ENCODE measurements at regions of chrX and their contacts with region 1.

Region 1: GRCh38 chrX:73855546-73855945 is 292.5 kb downstream of the CHIC1 start:
- DNase-seq: peak; percentile 46 to 78 (median 69)
- H3K4me3 ChIP-seq: no peak overlapping the region
- H3K27ac ChIP-seq: no peak overlapping the region
- H3K4me1 ChIP-seq: no peaks in the 10 kb centered on the region
- H3K27me3 ChIP-seq: no peaks in the 10 kb centered on the region
- CTCF ChIP-seq: peak; percentile 50 to 74 (median 64)
- EP300 ChIP-seq: no peak
- POLR2A ChIP-seq: no peak

Region 2: GRCh38 chrX:73468376-73468775 is 387.2 kb before region 1 on chrX:
- intact Hi-C with region 1: no loop called
- DNase-seq: no peak
- H3K4me3 ChIP-seq: no peak overlapping the region
- H3K27ac ChIP-seq: no peak overlapping the region
- H3K4me1 ChIP-seq: no peaks in the 10 kb centered on the region
- H3K27me3 ChIP-seq: no peaks in the 10 kb centered on the region
- CTCF ChIP-seq: no peak
- EP300 ChIP-seq: no peak
- POLR2A ChIP-seq: no peak

Region 3: DNA sequence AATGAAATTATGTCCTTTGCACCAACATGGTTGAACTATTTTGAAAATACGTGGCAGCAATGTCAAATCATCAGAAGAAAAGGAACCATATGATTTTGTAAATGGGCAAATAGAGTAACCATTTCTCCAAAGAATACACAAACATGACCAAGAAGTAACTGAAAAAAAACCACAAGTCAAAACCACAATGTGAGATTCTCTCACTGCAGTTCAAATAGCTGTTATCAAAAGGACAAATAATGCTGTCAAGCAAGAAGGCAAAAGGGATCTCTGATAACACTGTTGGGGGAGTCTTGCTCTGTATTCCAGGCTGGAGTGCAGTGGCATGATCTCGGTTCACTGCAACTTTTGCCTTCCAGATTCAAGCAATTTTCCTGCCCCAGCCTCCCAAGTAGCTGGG is 167.7 kb after region 1 on chrX:
- intact Hi-C with region 1: loop called in 1 of 4 experiments (anchors 10 kb)
- DNase-seq: no peak
- H3K4me3 ChIP-seq: no peak overlapping the region
- H3K27ac ChIP-seq: no peak overlapping the region
- H3K4me1 ChIP-seq: no peaks in the 10 kb centered on the region
- H3K27me3 ChIP-seq: no peaks in the 10 kb centered on the region
- CTCF ChIP-seq: no peak
- EP300 ChIP-seq: no peak
- POLR2A ChIP-seq: no peak

Region 4: DNA sequence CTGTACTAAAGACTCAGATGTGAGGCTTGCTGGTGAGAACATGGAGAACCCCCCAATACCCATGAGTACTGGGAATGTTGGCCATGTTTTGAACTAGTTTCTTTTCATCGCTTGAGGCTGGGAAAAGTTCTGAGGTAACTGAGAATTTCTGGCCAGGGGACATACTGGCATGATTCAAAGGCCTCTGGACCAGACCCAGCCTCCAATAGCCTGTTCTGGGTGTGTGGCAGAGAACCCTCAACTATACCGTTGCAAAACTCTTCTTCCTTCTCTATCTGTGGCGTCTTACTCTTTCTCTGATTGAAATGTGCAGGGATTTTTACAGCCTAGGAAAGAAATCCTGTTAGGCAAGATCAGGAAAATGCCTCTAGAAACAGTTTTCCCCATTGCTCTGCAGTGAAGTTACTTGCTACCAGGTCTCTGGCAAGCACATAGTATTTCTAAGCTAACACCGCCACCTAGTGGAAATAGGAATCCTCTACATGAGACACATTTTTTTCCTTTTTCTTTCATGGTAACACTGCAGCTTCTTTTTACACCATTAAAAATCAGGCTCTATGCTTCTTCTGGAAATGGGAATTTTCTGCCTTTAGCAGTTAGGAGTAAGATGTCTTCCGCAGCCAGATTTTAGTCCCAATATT is 277.7 kb after region 1 on chrX:
- intact Hi-C with region 1: loop called in 3 of 4 experiments (anchors 2 to 10 kb)
- DNase-seq: peak in 1 of 5 donors; percentile 24
- H3K4me3 ChIP-seq: no peak overlapping the region
- H3K27ac ChIP-seq: no peak overlapping the region
- H3K4me1 ChIP-seq: no peaks in the 10 kb centered on the region
- H3K27me3 ChIP-seq: no peaks in the 10 kb centered on the region
- CTCF ChIP-seq: peak; percentile 43 to 66 (median 60)
- EP300 ChIP-seq: no peak
- POLR2A ChIP-seq: no peak

Region 5: GRCh38 chrX:74536152-74536831 is 680.7 kb after region 1 on chrX:
- intact Hi-C with region 1: loop called in 1 of 4 experiments (anchors 10 kb)
- DNase-seq: peak; percentile 89 to 92 (median 90)
- H3K4me3 ChIP-seq: peak overlapping the region; percentile 37
- H3K27ac ChIP-seq: peak overlapping the region; percentile 79 to 85
- H3K4me1 ChIP-seq: no peaks in the 10 kb centered on the region
- H3K27me3 ChIP-seq: no peaks in the 10 kb centered on the region
- CTCF ChIP-seq: peak in 2 of 3 donors; percentile 48 to 51
- EP300 ChIP-seq: no peak
- POLR2A ChIP-seq: peak; percentile 56

Region 6: GRCh38 chrX:74550295-74550802 is 694.8 kb after region 1 on chrX:
- intact Hi-C with region 1: loop called in 2 of 4 experiments (anchors 10 kb)
- DNase-seq: peak; percentile 72 to 90 (median 86)
- H3K4me3 ChIP-seq: no peak overlapping the region
- H3K27ac ChIP-seq: no peak overlapping the region
- H3K4me1 ChIP-seq: no peaks in the 10 kb centered on the region
- H3K27me3 ChIP-seq: no peaks in the 10 kb centered on the region
- CTCF ChIP-seq: peak; percentile 81 to 96 (median 95)
- EP300 ChIP-seq: no peak
- POLR2A ChIP-seq: no peak